Lower leg skin (tissue), 4 donors: ENCODE measurements at regions of chr20 and their contacts with region 1.

Region 1: GRCh38 chr20:43537921-43538877 is 20.6 kb upstream of the SGK2 start:
- DNase-seq: peak; percentile 41 to 89
- H3K4me3 ChIP-seq: no peak overlapping the region
- CTCF ChIP-seq: no peak
- POLR2A ChIP-seq: no peak

Region 2: GRCh38 chr20:43472671-43473380 is 65.4 kb before region 1 on chr20:
- intact Hi-C with region 1: no loop called
- DNase-seq: no peak
- H3K4me3 ChIP-seq: no peak overlapping the region
- CTCF ChIP-seq: no peak
- POLR2A ChIP-seq: no peak

Region 3: DNA sequence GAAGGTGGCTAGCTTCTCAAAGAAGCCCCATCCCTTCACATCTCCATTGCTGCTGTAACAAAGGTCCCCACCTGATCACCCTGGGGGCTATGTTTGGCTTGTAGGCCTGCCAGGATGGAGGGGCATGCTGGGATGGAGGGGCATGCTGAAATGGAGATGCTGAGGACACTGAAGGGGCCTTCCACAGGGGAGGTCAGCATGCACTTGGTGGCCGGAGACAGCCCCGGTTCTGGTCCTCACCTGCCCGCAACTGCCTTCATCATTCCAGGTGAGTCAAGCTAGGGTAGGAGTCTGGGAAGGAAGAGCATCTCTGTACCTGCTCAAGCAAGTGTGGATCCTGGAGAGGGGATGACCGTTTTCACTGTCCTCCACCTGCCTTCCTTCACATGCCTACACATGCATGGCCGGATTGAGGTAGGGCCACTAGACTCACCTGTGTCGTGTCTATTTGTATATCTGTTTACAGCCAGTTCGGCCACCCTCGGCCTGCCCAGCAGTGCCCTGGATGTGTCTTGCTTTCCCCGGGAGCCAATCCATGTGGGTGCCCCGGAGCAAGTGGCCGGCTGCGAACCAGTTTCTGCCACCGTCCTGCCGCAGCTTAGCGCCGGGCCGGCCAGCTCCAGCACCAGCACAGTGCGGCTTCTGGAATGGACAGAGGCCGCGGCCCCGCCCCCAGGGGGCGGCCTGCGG is 24.7 kb before region 1 on chr20:
- intact Hi-C with region 1: loop called (anchors 1 kb)
- DNase-seq: no peak
- H3K4me3 ChIP-seq: peak overlapping the region; percentile 36
- CTCF ChIP-seq: no peak
- POLR2A ChIP-seq: no peak

Region 4: DNA sequence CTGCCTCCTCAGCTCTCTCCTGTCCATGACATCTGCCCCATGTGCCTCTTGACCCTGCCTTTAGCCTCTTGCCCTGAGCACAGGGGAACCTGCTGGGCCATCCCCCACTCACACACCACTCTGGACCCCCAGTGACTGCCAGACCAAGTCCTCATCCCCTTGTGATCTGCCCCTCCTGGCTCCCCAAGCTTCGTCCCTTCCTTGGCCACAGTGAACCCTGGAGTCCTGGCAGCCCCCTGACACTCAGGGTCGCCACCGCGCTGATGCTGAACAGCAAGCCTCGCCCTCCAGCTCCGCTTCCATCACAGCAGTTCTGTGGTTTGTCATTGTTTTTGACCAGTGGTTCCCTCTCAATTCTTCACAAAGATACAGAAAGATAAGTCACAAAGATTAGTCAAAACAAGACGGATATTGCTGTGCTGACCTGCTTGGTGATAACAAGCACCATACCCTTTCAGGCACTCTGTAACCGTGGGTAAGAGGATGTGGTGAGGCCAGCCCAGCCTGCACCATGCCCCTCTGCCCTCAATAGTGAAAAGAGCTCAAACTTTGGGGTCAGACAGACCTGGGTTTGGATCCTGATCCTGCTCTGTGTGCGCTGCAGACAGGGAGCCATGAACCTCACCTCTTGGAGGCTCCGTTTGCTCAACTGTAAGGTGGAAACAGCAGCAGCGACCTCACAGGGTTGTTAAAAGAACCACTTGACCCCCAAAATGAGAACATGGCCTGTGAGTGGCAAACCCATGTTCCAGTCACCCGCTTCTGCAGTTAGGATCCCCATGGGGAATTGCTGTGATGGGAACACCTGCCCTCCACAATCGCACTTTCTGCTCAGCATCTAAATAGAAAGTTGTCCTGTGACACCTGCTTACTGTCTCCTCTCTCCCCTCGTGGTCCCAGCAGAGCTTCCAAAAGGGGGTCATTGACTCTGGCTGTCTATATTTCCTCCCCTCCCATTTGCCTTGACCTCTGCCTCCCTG is 491.0 kb after region 1 on chr20:
- intact Hi-C with region 1: no loop called
- DNase-seq: peak in 1 of 2 donors; percentile 74
- H3K4me3 ChIP-seq: no peak overlapping the region
- CTCF ChIP-seq: no peak
- POLR2A ChIP-seq: no peak